CD4-positive, alpha-beta T cell (primary cell): ENCODE measurements at regions of chr1 and their contacts with region 1.

Region 1: GRCh38 chr1:151443846-151444782 is 15.2 kb downstream of the POGZ start:
- DNase-seq: peak; percentile 40 to 87 (median 60)
- ATAC-seq: peak; percentile 99
- H3K4me3 ChIP-seq: no peak overlapping the region
- H3K4me3 Mint-ChIP-seq: no peak overlapping the region
- H3K27ac ChIP-seq: no peak overlapping the region
- H3K27ac Mint-ChIP-seq: peak overlapping the region; percentile 14
- H3K4me1 ChIP-seq: peaks cover 11% of the 10 kb centered on the region
- H3K4me1 Mint-ChIP-seq: peaks cover 55% of the 10 kb centered on the region
- H3K27me3 ChIP-seq: no peaks in the 10 kb centered on the region
- H3K27me3 Mint-ChIP-seq: no peaks in the 10 kb centered on the region
- CTCF ChIP-seq: peak; percentile 85

Region 2: DNA sequence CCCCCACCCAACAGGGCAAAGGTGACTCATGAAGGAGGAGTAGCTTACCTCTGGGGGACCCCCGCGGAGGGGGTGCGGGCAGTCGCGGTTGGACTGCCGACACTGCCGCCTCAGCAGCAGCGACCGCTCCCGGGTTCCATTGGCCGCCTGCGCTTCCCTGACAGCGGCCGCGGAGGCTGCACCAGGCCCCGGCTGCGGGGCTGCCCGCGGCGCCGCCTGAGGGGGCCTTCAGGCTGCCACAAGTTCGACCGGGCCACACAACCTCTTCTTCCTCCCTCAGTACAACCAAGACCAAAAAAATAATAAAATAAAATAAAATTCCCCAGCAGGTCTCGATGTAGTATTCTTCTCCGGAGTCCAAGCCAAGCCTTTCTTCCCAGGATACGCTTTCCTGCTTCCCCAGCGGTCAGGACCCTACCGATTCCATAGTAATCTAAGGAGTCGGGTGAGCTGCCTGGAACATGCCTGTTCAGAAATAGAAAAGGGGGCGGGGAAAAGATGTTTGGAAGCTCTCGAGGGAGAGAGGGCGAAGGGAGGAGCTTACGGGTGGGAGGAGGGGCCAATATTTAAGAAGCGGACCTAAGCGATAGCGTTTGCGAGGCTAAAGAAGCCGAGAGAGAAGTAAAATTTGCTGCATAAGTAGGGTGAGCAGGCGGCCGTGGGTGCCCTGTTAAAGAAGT is 116.8 kb before region 1 on chr1 and contains the start of gene PI4KB:
- CTCF ChIA-PET with region 1: no interaction called
- POLR2A ChIA-PET with region 1: no interaction called
- intact Hi-C with region 1: no loop called
- DNase-seq: peak; percentile 76 to 97 (median 85)
- ATAC-seq: peak; percentile 94
- H3K4me3 ChIP-seq: peak within 1 kb of the TSS; percentile 75
- H3K4me3 Mint-ChIP-seq: peak within 1 kb of the TSS; percentile 95
- H3K27ac ChIP-seq: peak within 1 kb of the TSS; percentile 84 to 96
- H3K27ac Mint-ChIP-seq: peak within 1 kb of the TSS; percentile 93
- H3K4me1 ChIP-seq: peaks cover 35% of the 10 kb centered on the region
- H3K4me1 Mint-ChIP-seq: peaks cover 33% of the 10 kb centered on the region
- H3K27me3 ChIP-seq: no peaks in the 10 kb centered on the region
- H3K27me3 Mint-ChIP-seq: no peaks in the 10 kb centered on the region
- CTCF ChIP-seq: no peak
- total RNA-seq, gene PI4KB: 50.2 to 51.0 TPM

Region 3: GRCh38 chr1:151510957-151511635 is 67.0 kb after region 1 on chr1 and contains the start of gene CGN:
- CTCF ChIA-PET with region 1: interaction called, 7 read pairs
- POLR2A ChIA-PET with region 1: interaction called, 3 read pairs
- intact Hi-C with region 1: loop called in 1 of 2 experiments (anchors 2 kb)
- DNase-seq: peak; percentile 70 to 95 (median 84)
- ATAC-seq: peak; percentile 97
- H3K4me3 ChIP-seq: peak within 1 kb of the TSS; percentile 76
- H3K4me3 Mint-ChIP-seq: peak within 1 kb of the TSS; percentile 97
- H3K27ac ChIP-seq: peak within 1 kb of the TSS in 1 of 2 donors; percentile 6
- H3K27ac Mint-ChIP-seq: peak within 1 kb of the TSS; percentile 75
- H3K4me1 ChIP-seq: peaks cover 30% of the 10 kb centered on the region
- H3K4me1 Mint-ChIP-seq: peaks cover 32% of the 10 kb centered on the region
- H3K27me3 ChIP-seq: no peaks in the 10 kb centered on the region
- H3K27me3 Mint-ChIP-seq: no peaks in the 10 kb centered on the region
- CTCF ChIP-seq: no peak
- total RNA-seq, gene CGN: 0.08 to 0.28 TPM

Region 4: GRCh38 chr1:151539990-151540981 is 96.2 kb after region 1 on chr1 and contains the start of gene TUFT1:
- CTCF ChIA-PET with region 1: interaction called, 4 read pairs
- POLR2A ChIA-PET with region 1: no interaction called
- intact Hi-C with region 1: loop called (anchors 2 to 5 kb)
- DNase-seq: peak; percentile 88 to 97 (median 93)
- ATAC-seq: peak; percentile 99
- H3K4me3 ChIP-seq: peak within 1 kb of the TSS; percentile 73
- H3K4me3 Mint-ChIP-seq: peak within 1 kb of the TSS; percentile 97
- H3K27ac ChIP-seq: peak within 1 kb of the TSS in 1 of 2 donors; percentile 10
- H3K27ac Mint-ChIP-seq: peak within 1 kb of the TSS; percentile 86
- H3K4me1 ChIP-seq: peaks cover 25% of the 10 kb centered on the region
- H3K4me1 Mint-ChIP-seq: peaks cover 24% of the 10 kb centered on the region
- H3K27me3 ChIP-seq: no peaks in the 10 kb centered on the region
- H3K27me3 Mint-ChIP-seq: no peaks in the 10 kb centered on the region
- CTCF ChIP-seq: no peak
- total RNA-seq, gene TUFT1: 7.2 to 9.6 TPM

Region 5: DNA sequence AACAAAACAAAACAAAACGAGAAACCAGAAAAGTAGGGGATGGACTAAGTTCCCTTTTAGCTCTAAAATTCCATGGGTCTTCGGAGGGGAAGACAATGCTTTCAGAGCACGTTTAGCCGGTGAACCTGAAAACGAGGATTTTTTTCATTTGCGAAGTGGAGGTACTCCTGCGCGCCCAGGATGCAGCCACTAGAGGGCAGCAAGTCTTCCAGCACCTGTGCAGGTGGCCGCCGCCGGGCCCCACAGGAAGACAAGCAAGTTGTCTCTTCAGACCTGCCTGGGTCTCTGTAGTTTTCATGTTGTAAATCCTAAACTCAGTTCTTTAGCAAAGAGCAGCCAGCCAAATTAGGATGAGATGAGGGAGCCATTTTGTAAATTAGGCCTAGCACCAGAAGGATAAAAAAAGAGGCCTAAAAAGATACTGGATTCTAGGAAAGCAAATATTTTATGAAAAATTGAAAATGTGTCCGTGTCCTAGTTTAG is 150.1 kb after region 1 on chr1:
- CTCF ChIA-PET with region 1: interaction called, 5 read pairs
- POLR2A ChIA-PET with region 1: no interaction called
- intact Hi-C with region 1: loop called (anchors 2 to 10 kb)
- DNase-seq: peak; percentile 80 to 92 (median 86)
- ATAC-seq: peak; percentile 100
- H3K4me3 ChIP-seq: peak overlapping the region; percentile 14
- H3K4me3 Mint-ChIP-seq: peak overlapping the region; percentile 49
- H3K27ac ChIP-seq: no peak overlapping the region
- H3K27ac Mint-ChIP-seq: no peak overlapping the region
- H3K4me1 ChIP-seq: peaks cover 11% of the 10 kb centered on the region
- H3K4me1 Mint-ChIP-seq: peaks cover 10% of the 10 kb centered on the region
- H3K27me3 ChIP-seq: peaks cover 0 to 6% of the 10 kb centered on the region in 2 experiments
- H3K27me3 Mint-ChIP-seq: peaks cover 4% of the 10 kb centered on the region
- CTCF ChIP-seq: peak; percentile 95